CD8-positive, alpha-beta T cell (primary cell): ENCODE measurements at regions of chr5 and their contacts with region 1.

Region 1: DNA sequence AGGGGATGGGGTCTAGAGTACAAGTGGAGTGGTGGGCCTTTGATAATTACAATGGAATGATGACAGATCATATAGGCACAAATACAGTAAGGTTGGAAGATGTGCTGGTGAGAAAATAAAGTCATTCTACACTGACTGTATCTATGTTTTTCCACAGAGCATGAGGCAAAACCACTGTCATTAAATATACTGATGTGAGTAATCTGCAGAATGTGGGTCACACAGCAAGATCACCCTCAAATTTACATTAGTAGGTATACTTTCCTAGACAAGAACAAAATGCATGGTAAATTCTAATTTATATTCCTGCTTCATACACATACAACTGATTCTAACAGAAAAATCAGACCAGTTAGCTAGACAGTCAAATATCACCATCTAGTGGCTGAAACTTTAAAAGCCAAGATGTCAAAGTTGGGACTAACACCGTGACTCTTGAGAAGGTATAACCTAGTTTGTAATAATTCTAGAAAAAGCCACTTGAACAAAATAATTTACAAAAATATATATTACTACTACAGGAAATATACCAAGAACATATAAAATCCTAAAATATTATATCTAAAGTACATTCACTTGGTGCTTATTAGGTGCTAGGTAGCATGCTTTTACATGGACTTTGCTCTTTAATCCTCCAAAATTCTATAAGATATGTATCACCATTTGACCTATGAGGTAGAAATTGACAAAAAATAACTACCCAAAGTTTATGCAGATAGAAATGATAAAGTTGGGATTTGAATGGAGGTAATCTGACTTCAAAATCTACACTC is 19.5 kb downstream of the TTC33 start:
- DNase-seq: peak in 2 of 9 experiments; percentile 68 to 74
- ATAC-seq: peak; percentile 71
- H3K4me3 ChIP-seq: no peak overlapping the region
- H3K4me3 Mint-ChIP-seq: no peak overlapping the region
- H3K27ac ChIP-seq: no peak overlapping the region
- H3K27ac Mint-ChIP-seq: no peak overlapping the region
- H3K4me1 ChIP-seq: no peaks in the 10 kb centered on the region
- H3K4me1 Mint-ChIP-seq: peaks cover 23% of the 10 kb centered on the region
- H3K27me3 ChIP-seq: no peaks in the 10 kb centered on the region
- H3K27me3 Mint-ChIP-seq: no peaks in the 10 kb centered on the region
- CTCF ChIP-seq: peak; percentile 88

Region 2: DNA sequence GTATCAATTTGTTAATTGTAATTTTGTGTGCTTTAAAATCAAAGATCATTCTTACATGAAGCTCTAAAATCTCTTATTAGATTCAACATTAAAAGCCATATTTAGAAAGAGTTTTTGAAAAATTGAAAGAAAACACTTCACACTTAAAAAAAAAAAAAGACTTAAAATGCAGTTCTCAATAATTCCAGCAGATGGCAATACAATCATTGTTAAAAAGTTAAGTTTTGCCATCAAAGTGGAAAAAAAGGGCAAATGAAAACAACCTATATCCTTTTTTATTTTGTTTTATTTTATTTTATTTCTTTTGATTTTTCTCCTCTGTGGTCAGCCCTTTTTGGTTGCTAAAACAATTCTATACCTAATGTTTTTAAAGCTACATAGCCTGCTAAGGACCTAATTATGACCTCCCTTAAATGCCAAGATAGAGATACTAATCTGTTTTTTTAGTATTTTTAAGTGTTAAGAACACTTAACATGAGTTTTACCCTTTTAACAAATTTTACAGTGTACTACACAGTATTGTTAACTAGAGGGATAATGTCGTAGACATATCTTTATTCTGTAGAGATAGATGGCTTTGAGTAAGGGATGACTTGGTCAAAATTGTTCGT is 1157.3 kb before region 1 on chr5:
- CTCF ChIA-PET with region 1: interaction called, 3 read pairs
- POLR2A ChIA-PET with region 1: no interaction called
- intact Hi-C with region 1: loop called (anchors 1 to 2 kb)
- DNase-seq: peak in 2 of 9 experiments; percentile 36 to 52
- ATAC-seq: no peak
- H3K4me3 ChIP-seq: no peak overlapping the region
- H3K4me3 Mint-ChIP-seq: no peak overlapping the region
- H3K27ac ChIP-seq: no peak overlapping the region
- H3K27ac Mint-ChIP-seq: no peak overlapping the region
- H3K4me1 ChIP-seq: peaks cover 4% of the 10 kb centered on the region
- H3K4me1 Mint-ChIP-seq: peaks cover 6% of the 10 kb centered on the region
- H3K27me3 ChIP-seq: no peaks in the 10 kb centered on the region
- H3K27me3 Mint-ChIP-seq: peaks cover 5% of the 10 kb centered on the region
- CTCF ChIP-seq: peak; percentile 98

Region 3: GRCh38 chr5:39714036-39714698 is 1022.1 kb before region 1 on chr5:
- CTCF ChIA-PET with region 1: interaction called, 14 read pairs
- POLR2A ChIA-PET with region 1: no interaction called
- intact Hi-C with region 1: loop called (anchors 1 kb)
- DNase-seq: peak in 6 of 9 experiments; percentile 1 to 66 (median 26)
- ATAC-seq: no peak
- H3K4me3 ChIP-seq: no peak overlapping the region
- H3K4me3 Mint-ChIP-seq: no peak overlapping the region
- H3K27ac ChIP-seq: no peak overlapping the region
- H3K27ac Mint-ChIP-seq: no peak overlapping the region
- H3K4me1 ChIP-seq: no peaks in the 10 kb centered on the region
- H3K4me1 Mint-ChIP-seq: no peaks in the 10 kb centered on the region
- H3K27me3 ChIP-seq: no peaks in the 10 kb centered on the region
- H3K27me3 Mint-ChIP-seq: peaks cover 9% of the 10 kb centered on the region
- CTCF ChIP-seq: peak; percentile 67

Region 4: DNA sequence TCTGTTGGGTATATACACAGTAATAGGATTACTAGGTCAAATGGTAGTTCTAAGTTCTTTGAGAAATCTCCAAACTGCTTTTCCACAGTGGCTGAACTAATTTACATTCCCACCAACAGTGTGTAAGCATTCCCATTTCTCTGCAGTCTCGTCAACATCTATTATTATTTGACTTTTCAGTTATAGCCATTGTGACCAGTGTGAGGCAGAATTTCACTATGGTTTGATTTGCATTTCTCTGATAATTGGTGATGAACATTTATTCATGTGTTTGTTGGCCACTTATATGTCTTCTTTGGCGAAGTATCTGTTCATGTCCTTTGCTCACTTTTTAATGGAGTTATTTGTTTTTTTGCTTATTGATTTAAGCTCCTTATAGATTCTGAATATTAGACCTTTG is 715.3 kb before region 1 on chr5:
- CTCF ChIA-PET with region 1: no interaction called
- POLR2A ChIA-PET with region 1: no interaction called
- intact Hi-C with region 1: loop called in 1 of 2 experiments (anchors 2 kb)
- DNase-seq: peak in 2 of 9 experiments; percentile 15 to 28
- ATAC-seq: no peak
- H3K4me3 ChIP-seq: no peak overlapping the region
- H3K4me3 Mint-ChIP-seq: no peak overlapping the region
- H3K27ac ChIP-seq: no peak overlapping the region
- H3K27ac Mint-ChIP-seq: no peak overlapping the region
- H3K4me1 ChIP-seq: no peaks in the 10 kb centered on the region
- H3K4me1 Mint-ChIP-seq: no peaks in the 10 kb centered on the region
- H3K27me3 ChIP-seq: no peaks in the 10 kb centered on the region
- H3K27me3 Mint-ChIP-seq: peaks cover 6% of the 10 kb centered on the region
- CTCF ChIP-seq: no peak

Region 5: GRCh38 chr5:40502736-40503135 is 233.6 kb before region 1 on chr5:
- CTCF ChIA-PET with region 1: no interaction called
- POLR2A ChIA-PET with region 1: no interaction called
- intact Hi-C with region 1: loop called in 1 of 2 experiments (anchors 5 kb)
- DNase-seq: no peak
- ATAC-seq: no peak
- H3K4me3 ChIP-seq: no peak overlapping the region
- H3K4me3 Mint-ChIP-seq: no peak overlapping the region
- H3K27ac ChIP-seq: no peak overlapping the region
- H3K27ac Mint-ChIP-seq: no peak overlapping the region
- H3K4me1 ChIP-seq: no peaks in the 10 kb centered on the region
- H3K4me1 Mint-ChIP-seq: peaks cover 9% of the 10 kb centered on the region
- H3K27me3 ChIP-seq: no peaks in the 10 kb centered on the region
- H3K27me3 Mint-ChIP-seq: no peaks in the 10 kb centered on the region
- CTCF ChIP-seq: no peak